ENCODE measurements at regions of chr2 and their contacts with region 1.

Region 1: DNA sequence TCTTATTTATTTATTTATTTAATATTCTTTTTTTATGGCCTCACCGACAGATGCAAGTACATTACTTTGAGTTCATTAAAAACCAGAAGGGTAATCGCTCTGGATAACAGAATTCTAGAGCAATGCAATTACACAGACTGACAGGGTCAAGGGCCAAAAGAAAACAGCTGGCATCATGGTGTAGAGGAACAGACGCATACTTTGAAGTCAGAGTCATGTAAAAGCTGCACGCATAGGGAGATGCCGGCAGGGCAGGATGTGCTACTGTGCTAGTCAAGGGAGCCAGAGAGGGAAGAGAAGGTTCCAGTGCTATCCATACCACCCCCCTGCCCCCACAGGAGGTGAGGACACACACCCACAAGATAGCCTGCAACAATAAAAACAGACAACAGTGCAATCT is 115.2 kb upstream of the TFCP2L1 start:
- DNase-seq: no peak
- ATAC-seq: no peak
- H3K4me3 ChIP-seq: no peak overlapping the region
- H3K4me3 Mint-ChIP-seq: no peak overlapping the region
- H3K27ac ChIP-seq: no peak overlapping the region
- H3K27ac Mint-ChIP-seq: no peak overlapping the region
- H3K4me1 ChIP-seq: no peaks in the 10 kb centered on the region
- H3K4me1 Mint-ChIP-seq: peaks cover 0 to 7% of the 10 kb centered on the region in 2 donors
- H3K27me3 ChIP-seq: no peaks in the 10 kb centered on the region
- H3K27me3 Mint-ChIP-seq: no peaks in the 10 kb centered on the region
- CTCF ChIP-seq: no peak

Region 2: GRCh38 chr2:121372721-121373353 is 27.4 kb before region 1 on chr2:
- intact Hi-C with region 1: no loop called
- DNase-seq: no peak
- ATAC-seq: no peak
- H3K4me3 ChIP-seq: no peak overlapping the region
- H3K4me3 Mint-ChIP-seq: no peak overlapping the region
- H3K27ac ChIP-seq: no peak overlapping the region
- H3K27ac Mint-ChIP-seq: peak overlapping the region in 1 of 2 donors; percentile 15
- H3K4me1 ChIP-seq: no peaks in the 10 kb centered on the region
- H3K4me1 Mint-ChIP-seq: peaks cover 3 to 6% of the 10 kb centered on the region in 2 donors
- H3K27me3 ChIP-seq: no peaks in the 10 kb centered on the region
- H3K27me3 Mint-ChIP-seq: no peaks in the 10 kb centered on the region
- CTCF ChIP-seq: no peak

Region 3: GRCh38 chr2:121429119-121429903 is 29.1 kb after region 1 on chr2:
- intact Hi-C with region 1: no loop called
- DNase-seq: no peak
- ATAC-seq: no peak
- H3K4me3 ChIP-seq: no peak overlapping the region
- H3K4me3 Mint-ChIP-seq: no peak overlapping the region
- H3K27ac ChIP-seq: no peak overlapping the region
- H3K27ac Mint-ChIP-seq: peak overlapping the region in 1 of 2 donors; percentile 20
- H3K4me1 ChIP-seq: no peaks in the 10 kb centered on the region
- H3K4me1 Mint-ChIP-seq: no peaks in the 10 kb centered on the region
- H3K27me3 ChIP-seq: no peaks in the 10 kb centered on the region
- H3K27me3 Mint-ChIP-seq: no peaks in the 10 kb centered on the region
- CTCF ChIP-seq: no peak

Region 4: DNA sequence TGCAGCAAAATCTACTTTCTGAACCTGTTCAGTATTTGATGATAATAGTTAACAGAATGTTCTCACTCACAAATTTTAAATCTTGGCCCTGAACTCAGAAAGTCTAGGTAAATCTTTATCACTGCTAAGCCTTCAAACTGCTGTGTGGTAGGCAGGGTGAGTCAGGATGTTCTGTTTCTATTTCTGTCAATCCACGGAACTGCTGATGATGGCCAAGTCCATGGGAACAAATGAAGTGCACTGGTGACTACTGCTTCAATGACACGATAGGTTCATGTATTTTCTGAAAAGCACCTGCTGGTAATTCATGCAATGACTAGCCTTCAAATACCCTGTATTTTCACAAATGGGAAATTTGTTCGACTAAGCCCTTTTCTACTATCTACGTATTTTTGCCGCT is 322.3 kb after region 1 on chr2:
- intact Hi-C with region 1: loop called (anchors 1 kb)
- DNase-seq: no peak
- ATAC-seq: no peak
- H3K4me3 ChIP-seq: no peak overlapping the region
- H3K4me3 Mint-ChIP-seq: no peak overlapping the region
- H3K27ac ChIP-seq: no peak overlapping the region
- H3K27ac Mint-ChIP-seq: no peak overlapping the region
- H3K4me1 ChIP-seq: peaks cover 8% of the 10 kb centered on the region
- H3K4me1 Mint-ChIP-seq: peaks cover 5% of the 10 kb centered on the region in 2 donors
- H3K27me3 ChIP-seq: no peaks in the 10 kb centered on the region
- H3K27me3 Mint-ChIP-seq: no peaks in the 10 kb centered on the region
- CTCF ChIP-seq: no peak

Region 5: DNA sequence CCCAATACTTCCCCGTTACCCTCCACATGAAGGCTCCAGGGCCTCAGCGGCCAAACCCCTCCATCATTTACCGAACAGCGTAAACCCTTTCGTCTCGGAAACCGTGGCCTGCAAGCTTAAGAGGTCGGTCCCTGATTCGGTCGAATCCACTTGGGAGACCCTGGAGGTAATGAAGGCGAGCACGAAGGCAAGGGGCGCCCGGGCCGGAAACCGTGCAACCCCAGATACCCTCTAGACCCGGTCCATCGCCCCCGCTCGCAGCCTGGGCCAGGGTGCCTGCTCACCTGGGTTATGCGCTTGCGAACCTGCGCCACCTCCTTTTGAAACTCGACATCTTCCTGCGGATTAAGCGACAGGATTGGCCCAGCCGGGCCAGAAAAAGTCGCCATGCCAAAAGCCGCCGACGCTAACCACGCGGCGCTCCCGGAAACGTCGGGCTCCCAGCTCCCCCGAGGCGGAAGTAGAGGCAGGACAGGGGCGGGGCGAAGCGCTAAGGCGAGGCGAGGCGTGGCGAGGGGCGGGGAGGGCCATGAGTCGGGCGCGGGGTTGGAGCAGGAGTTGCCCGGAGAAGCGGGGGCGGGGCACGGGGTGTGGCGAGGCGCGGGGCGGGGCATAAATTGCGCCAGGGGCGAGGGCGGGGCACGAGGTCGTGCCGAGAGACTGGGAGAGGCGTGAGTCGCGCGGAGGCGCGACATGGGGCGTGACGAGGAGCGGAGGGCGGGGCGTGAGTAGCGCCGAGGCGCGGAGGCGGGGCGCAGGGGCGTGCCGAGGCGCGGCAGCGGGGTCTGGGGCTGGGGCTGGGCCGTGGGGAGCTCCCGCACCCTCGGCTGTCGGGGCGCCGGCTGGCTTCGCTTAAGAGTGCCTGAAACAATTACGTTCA is 336.5 kb after region 1 on chr2 and contains the start of gene NIFK:
- intact Hi-C with region 1: loop called (anchors 5 kb)
- DNase-seq: peak; percentile 98 to 99
- ATAC-seq: peak; percentile 89 to 97 (median 90)
- H3K4me3 ChIP-seq: peak within 1 kb of the TSS; percentile 85
- H3K4me3 Mint-ChIP-seq: peak within 1 kb of the TSS; percentile 99
- H3K27ac ChIP-seq: peak within 1 kb of the TSS; percentile 76
- H3K27ac Mint-ChIP-seq: peak within 1 kb of the TSS; percentile 96 to 98
- H3K4me1 ChIP-seq: peaks cover 23% of the 10 kb centered on the region
- H3K4me1 Mint-ChIP-seq: peaks cover 35 to 48% of the 10 kb centered on the region in 2 donors
- H3K27me3 ChIP-seq: no peaks in the 10 kb centered on the region
- H3K27me3 Mint-ChIP-seq: no peaks in the 10 kb centered on the region
- CTCF ChIP-seq: no peak
- total RNA-seq, gene NIFK: 32.7 to 37.7 (median 33.5) TPM

Region 6: GRCh38 chr2:121755236-121756111 is 355.3 kb after region 1 on chr2 and contains the start of gene TSN:
- intact Hi-C with region 1: loop called (anchors 1 kb)
- DNase-seq: peak; percentile 96 to 99
- ATAC-seq: peak; percentile 97 to 100 (median 98)
- H3K4me3 ChIP-seq: peak within 1 kb of the TSS; percentile 94
- H3K4me3 Mint-ChIP-seq: peak within 1 kb of the TSS; percentile 91
- H3K27ac ChIP-seq: peak within 1 kb of the TSS; percentile 75
- H3K27ac Mint-ChIP-seq: peak within 1 kb of the TSS; percentile 78 to 84
- H3K4me1 ChIP-seq: peaks cover 5% of the 10 kb centered on the region
- H3K4me1 Mint-ChIP-seq: peaks cover 19 to 25% of the 10 kb centered on the region in 2 donors
- H3K27me3 ChIP-seq: no peaks in the 10 kb centered on the region
- H3K27me3 Mint-ChIP-seq: no peaks in the 10 kb centered on the region
- CTCF ChIP-seq: no peak
- total RNA-seq, gene TSN: 54.7 to 66.9 (median 62.5) TPM